ENCODE measurements at regions of chr19 and their contacts with region 1.

Region 1: DNA sequence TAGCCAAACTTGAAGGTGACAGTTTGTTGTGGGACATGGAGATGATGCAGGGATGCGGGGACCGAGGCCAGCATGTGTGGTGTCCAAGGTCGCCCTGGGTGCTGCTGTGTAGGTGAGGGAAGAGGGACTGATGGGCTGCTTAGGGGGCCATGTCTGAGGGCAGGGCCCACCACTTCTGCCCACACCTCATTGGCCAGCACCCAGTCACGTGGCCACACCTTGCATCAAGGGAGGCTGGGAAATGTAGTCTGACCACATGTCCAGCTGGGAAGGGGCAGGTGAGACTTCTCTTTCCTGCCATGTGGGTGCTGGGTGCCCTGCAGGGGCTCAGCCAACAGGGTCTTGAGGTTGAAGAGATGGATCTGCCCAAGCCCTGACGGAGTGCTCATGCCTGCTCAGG is 88.9 kb downstream of the KDM4B start:
- ATAC-seq: peak; percentile 11 to 86 (median 54)
- H3K4me3 ChIP-seq: no peak overlapping the region
- H3K27ac ChIP-seq: peak overlapping the region in 1 of 2 donors; percentile 73
- H3K4me1 ChIP-seq: peaks cover 24 to 36% of the 10 kb centered on the region in 2 donors

Region 2: GRCh38 chr19:5308471-5309437 is 250.9 kb after region 1 on chr19:
- in situ Hi-C with region 1: loop called in 1 of 9 experiments (anchors 25 kb)
- ATAC-seq: peak; percentile 75 to 86 (median 81)
- H3K4me3 ChIP-seq: no peak overlapping the region
- H3K27ac ChIP-seq: peak overlapping the region; percentile 71 to 82
- H3K4me1 ChIP-seq: peaks cover 4 to 6% of the 10 kb centered on the region in 2 donors

Measured in motor neuron (in vitro differentiated cells).